AG04450 (cell line): ENCODE measurements at regions of chr4 and their contacts with region 1.

Region 1: GRCh38 chr4:121788896-121789295 is 12.2 kb upstream of the EXOSC9 start:
- DNase-seq: no peak
- H3K4me3 ChIP-seq: no peak overlapping the region
- H3K27ac ChIP-seq: peak overlapping the region; percentile 66
- H3K27me3 ChIP-seq: no peaks in the 10 kb centered on the region
- CTCF ChIP-seq: no peak

Region 2: DNA sequence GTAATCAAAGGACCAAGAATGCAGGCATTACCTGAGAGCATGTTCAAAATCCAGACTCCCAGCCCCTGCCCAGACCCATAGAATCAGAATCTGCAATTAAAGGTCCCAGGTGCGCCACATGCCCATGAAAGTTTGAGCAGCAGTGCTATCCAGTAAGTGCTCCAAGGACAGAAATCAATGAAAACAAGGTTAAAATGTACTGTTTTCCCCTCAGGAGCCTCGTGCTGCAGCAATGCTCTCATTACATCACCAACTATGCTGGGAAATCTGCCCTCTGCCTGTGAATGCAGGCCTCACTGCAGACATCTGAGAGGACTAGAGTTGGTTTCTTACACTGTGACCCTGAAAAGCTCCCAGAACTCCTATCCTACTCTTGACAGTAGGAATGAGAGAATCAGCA is 113.2 kb before region 1 on chr4:
- CTCF ChIA-PET with region 1: interaction called, 11 read pairs
- POLR2A ChIA-PET with region 1: no interaction called
- DNase-seq: no peak
- H3K4me3 ChIP-seq: no peak overlapping the region
- H3K27ac ChIP-seq: no peak overlapping the region
- H3K27me3 ChIP-seq: no peaks in the 10 kb centered on the region
- CTCF ChIP-seq: peak; percentile 56

Region 3: GRCh38 chr4:121758925-121759568 is 29.8 kb before region 1 on chr4:
- CTCF ChIA-PET with region 1: no interaction called
- POLR2A ChIA-PET with region 1: no interaction called
- DNase-seq: no peak
- H3K4me3 ChIP-seq: no peak overlapping the region
- H3K27ac ChIP-seq: no peak overlapping the region
- H3K27me3 ChIP-seq: no peaks in the 10 kb centered on the region
- CTCF ChIP-seq: no peak

Region 4: GRCh38 chr4:121777625-121778024 is 11.3 kb before region 1 on chr4:
- CTCF ChIA-PET with region 1: interaction called, 5 read pairs
- POLR2A ChIA-PET with region 1: interaction called, 18 read pairs
- DNase-seq: no peak
- H3K4me3 ChIP-seq: no peak overlapping the region
- H3K27ac ChIP-seq: no peak overlapping the region
- H3K27me3 ChIP-seq: no peaks in the 10 kb centered on the region
- CTCF ChIP-seq: no peak